BJ (cell line): ENCODE measurements at regions of chr14 and their contacts with region 1.

Region 1: DNA sequence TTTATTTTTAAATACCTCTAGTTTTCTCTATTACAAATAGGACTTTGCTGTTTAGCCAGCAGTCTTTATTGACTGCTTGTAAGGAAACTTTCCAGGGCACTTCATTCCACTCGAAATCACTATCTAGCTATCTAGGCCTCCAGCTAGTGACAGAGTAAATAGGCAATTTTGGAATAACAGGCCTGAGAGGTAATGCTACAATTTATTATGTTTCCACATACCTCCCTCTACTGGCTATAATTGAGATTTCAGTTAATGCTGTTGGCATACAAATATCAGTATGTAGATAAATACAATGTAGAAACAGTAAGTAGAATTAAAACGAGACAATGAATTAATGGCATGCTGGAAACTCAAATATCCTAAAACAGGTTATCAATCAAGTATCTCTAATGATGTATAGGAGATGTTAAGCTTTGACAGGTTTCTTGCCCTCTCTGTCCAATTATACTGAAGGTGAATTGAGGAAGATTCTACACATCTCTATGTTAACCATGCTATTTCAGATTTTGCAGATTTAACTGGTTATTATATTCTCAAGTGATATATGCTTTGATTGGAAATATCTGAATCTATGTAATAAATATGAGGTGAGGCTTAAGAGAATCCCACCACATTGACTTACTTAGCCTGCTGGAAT is 7.2 kb downstream of the DTD2 start:
- DNase-seq: peak; percentile 12
- H3K4me3 ChIP-seq: no peak overlapping the region
- H3K27me3 ChIP-seq: no peaks in the 10 kb centered on the region
- CTCF ChIP-seq: peak; percentile 55

Region 2: DNA sequence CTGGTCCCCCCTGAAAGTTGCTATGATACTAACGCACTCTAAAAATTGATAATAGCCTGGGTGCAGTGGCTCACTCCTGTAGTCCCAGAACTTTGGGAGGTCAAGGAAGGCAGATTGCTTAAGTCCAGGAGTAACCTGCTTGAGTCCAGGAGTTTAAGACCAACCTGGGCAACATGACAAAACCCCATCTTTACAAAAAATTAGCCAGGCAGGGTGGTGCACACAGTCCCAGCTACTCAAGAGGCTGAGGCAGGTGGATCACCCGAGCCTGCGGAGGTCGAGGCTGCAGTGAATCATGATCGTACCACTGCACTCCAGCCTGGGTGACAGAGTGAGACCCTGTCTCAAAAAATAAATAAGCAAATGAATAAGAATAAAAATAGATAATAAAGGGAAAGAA is 72.7 kb before region 1 on chr14:
- CTCF ChIA-PET with region 1: interaction called, 15 read pairs
- POLR2A ChIA-PET with region 1: no interaction called
- DNase-seq: no peak
- H3K4me3 ChIP-seq: no peak overlapping the region
- H3K27me3 ChIP-seq: no peaks in the 10 kb centered on the region
- CTCF ChIP-seq: no peak

Region 3: GRCh38 chr14:31420319-31421111 is 29.6 kb before region 1 on chr14 and contains the start of gene HEATR5A:
- CTCF ChIA-PET with region 1: interaction called, 10 read pairs
- POLR2A ChIA-PET with region 1: no interaction called
- DNase-seq: peak; percentile 66
- H3K4me3 ChIP-seq: peak within 1 kb of the TSS; percentile 100
- H3K27me3 ChIP-seq: no peaks in the 10 kb centered on the region
- CTCF ChIP-seq: peak; percentile 40
- polyA plus RNA-seq, gene HEATR5A: 34.3 and 61.3 TPM in 2 replicates